ENCODE measurements at regions of chr11 and their contacts with region 1.

Region 1: GRCh38 chr11:97702951-97703350 is 1313.1 kb downstream of the JRKL start:
- DNase-seq: no peak
- H3K4me3 ChIP-seq: no peak overlapping the region
- H3K27ac ChIP-seq: no peak overlapping the region
- H3K4me1 ChIP-seq: no peaks in the 10 kb centered on the region
- H3K27me3 ChIP-seq: no peaks in the 10 kb centered on the region
- CTCF ChIP-seq: no peak
- POLR2A ChIP-seq: no peak

Region 2: GRCh38 chr11:97645736-97646135 is 57.2 kb before region 1 on chr11:
- intact Hi-C with region 1: loop called (anchors 10 kb)
- DNase-seq: no peak
- H3K4me3 ChIP-seq: no peak overlapping the region
- H3K27ac ChIP-seq: no peak overlapping the region
- H3K4me1 ChIP-seq: no peaks in the 10 kb centered on the region
- H3K27me3 ChIP-seq: no peaks in the 10 kb centered on the region
- CTCF ChIP-seq: no peak
- POLR2A ChIP-seq: no peak

Region 3: GRCh38 chr11:97800891-97801290 is 97.9 kb after region 1 on chr11:
- intact Hi-C with region 1: no loop called
- DNase-seq: no peak
- H3K4me3 ChIP-seq: no peak overlapping the region
- H3K27ac ChIP-seq: no peak overlapping the region
- H3K4me1 ChIP-seq: no peaks in the 10 kb centered on the region
- H3K27me3 ChIP-seq: no peaks in the 10 kb centered on the region
- CTCF ChIP-seq: no peak
- POLR2A ChIP-seq: no peak